Activated CD4-positive, alpha-beta T cell treated with anti-CD3 and anti-CD28 coated beads for 36 hours (primary cell): ENCODE measurements at regions of chr1 and their contacts with region 1.

Region 1: DNA sequence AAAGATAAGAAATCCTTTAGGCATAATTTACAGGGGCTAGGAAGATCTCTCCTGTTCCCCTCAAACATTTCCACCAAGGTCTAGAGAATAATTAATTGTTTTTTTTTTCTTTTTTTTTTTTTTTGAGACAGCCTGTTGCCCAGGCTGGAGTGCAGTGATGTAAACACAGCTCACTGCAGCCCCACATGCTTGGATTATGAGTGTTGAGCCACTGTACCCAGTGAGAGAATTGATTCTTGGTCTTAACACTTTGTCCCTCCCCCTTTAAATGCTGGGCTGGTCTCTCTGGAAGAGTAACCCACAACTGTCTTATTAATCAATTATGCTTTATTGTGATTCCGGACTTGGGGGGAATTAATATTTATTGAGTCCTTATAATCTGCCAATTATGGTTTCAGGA is 33.4 kb downstream of the ATF3 start:
- DNase-seq: no peak
- ATAC-seq: no peak
- H3K4me3 Mint-ChIP-seq: no peak overlapping the region
- H3K27ac Mint-ChIP-seq: no peak overlapping the region
- H3K4me1 Mint-ChIP-seq: peaks cover 13% of the 10 kb centered on the region
- H3K27me3 Mint-ChIP-seq: peaks cover 22% of the 10 kb centered on the region

Region 2: DNA sequence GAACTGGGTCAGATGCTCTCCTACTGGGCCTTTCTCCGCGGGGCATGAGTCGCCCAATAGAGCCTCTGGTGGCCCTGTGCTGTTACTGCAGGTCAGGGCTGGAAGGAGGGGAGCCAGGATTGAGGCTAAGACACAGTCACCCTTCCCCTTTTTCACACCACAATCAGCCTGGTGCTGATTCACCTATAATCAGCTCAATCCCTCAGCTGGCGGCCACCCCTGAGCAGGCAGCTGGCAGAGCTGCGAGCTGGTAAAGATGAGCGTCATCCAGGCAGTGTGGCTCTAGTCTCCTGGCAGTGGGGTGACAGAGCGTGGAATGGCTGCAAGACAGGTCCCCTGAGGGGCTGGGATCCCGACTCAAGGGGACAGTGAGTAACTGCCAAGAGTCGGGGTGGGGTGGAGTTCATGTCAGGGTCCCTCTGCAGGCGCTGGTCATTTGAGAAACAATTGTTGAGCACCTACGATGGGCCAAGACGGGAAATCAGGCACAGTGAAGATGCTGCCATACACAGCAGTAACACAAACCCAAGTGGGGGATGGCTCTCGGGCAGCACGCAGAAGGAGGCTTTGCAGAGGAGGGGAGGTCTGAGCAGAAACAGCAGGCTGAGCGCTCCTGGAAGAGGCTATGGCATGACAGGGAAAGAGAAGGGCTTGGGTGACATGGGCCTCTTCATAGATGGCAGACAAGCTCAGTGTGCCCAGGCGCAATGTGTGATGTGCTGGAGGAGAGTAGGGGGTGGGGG is 11.6 kb before region 1 on chr1:
- CTCF ChIA-PET with region 1: interaction called, 14 read pairs
- POLR2A ChIA-PET with region 1: no interaction called
- intact Hi-C with region 1: no loop called
- DNase-seq: peak; percentile 80
- ATAC-seq: peak; percentile 97
- H3K4me3 Mint-ChIP-seq: no peak overlapping the region
- H3K27ac Mint-ChIP-seq: no peak overlapping the region
- H3K4me1 Mint-ChIP-seq: peaks cover 7% of the 10 kb centered on the region
- H3K27me3 Mint-ChIP-seq: peaks cover 3% of the 10 kb centered on the region